AG04450 (cell line): ENCODE measurements at regions of chr14 and their contacts with region 1.

Region 1: DNA sequence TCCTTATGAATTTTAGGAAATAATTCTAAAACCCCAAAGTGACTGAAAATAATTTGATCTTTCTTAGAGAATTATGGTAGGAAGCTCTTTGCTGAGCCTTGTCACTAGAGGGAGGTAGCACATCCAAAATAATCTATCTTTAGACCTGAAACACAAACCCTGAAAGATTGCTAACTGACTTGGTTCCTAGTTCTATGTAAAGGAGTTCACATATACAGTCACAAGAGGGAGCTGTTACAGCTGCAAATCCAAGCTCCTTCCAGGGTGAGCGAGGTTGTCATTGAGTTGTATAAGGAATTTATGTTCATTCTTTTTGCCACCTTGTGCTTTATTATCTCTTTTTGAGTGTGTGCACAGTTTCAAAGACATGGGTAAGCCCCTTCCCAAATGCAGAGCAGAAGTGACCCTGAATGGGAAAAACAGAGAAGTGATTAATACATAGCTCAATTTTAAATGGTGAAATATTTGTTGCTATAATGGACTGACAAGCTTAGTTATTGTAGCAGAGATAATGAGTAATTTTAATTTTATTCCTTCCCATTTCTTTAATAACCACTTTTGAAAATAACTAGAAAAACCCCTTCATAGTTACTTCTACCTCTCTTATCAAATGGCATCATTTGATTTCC is 387.9 kb downstream of the DAD1 start:
- DNase-seq: no peak
- H3K4me3 ChIP-seq: no peak overlapping the region
- H3K27ac ChIP-seq: no peak overlapping the region
- H3K27me3 ChIP-seq: no peaks in the 10 kb centered on the region
- CTCF ChIP-seq: peak; percentile 85

Region 2: GRCh38 chr14:22163051-22163450 is 38.0 kb before region 1 on chr14:
- CTCF ChIA-PET with region 1: interaction called, 68 read pairs
- POLR2A ChIA-PET with region 1: no interaction called
- DNase-seq: no peak
- H3K4me3 ChIP-seq: no peak overlapping the region
- H3K27ac ChIP-seq: no peak overlapping the region
- H3K27me3 ChIP-seq: peaks cover 2% of the 10 kb centered on the region
- CTCF ChIP-seq: peak; percentile 60

Region 3: DNA sequence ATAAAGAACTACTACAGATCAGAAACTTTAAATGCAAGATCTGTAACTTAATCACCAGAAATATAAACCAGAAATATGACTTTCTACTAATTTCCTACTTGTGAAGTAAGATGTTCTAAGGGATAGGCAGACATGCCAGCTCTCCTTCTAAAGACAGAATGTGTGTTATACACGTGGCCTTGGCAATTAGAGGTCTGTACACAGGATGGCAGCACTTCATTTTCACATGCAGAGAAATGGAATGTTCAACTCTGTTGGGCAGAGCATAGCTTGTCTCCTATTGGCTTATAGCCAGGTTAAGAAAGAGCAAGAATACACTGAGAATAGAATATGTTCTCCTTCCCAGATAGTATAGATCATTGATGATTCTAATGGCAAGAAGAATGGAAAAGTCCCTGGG is 15.9 kb before region 1 on chr14:
- CTCF ChIA-PET with region 1: interaction called, 37 read pairs
- POLR2A ChIA-PET with region 1: interaction called, 3 read pairs
- DNase-seq: no peak
- H3K4me3 ChIP-seq: no peak overlapping the region
- H3K27ac ChIP-seq: no peak overlapping the region
- H3K27me3 ChIP-seq: no peaks in the 10 kb centered on the region
- CTCF ChIP-seq: peak; percentile 24; the same call in 1 of the 2 replicates

Region 4: GRCh38 chr14:22231018-22231417 is 29.9 kb after region 1 on chr14:
- CTCF ChIA-PET with region 1: interaction called, 96 read pairs
- POLR2A ChIA-PET with region 1: no interaction called
- DNase-seq: no peak
- H3K4me3 ChIP-seq: no peak overlapping the region
- H3K27ac ChIP-seq: no peak overlapping the region
- H3K27me3 ChIP-seq: no peaks in the 10 kb centered on the region
- CTCF ChIP-seq: no peak

Region 5: GRCh38 chr14:22282417-22282816 is 81.3 kb after region 1 on chr14:
- CTCF ChIA-PET with region 1: interaction called, 15 read pairs
- POLR2A ChIA-PET with region 1: no interaction called
- DNase-seq: no peak
- H3K4me3 ChIP-seq: no peak overlapping the region
- H3K27ac ChIP-seq: no peak overlapping the region
- H3K27me3 ChIP-seq: no peaks in the 10 kb centered on the region
- CTCF ChIP-seq: no peak

Region 6: DNA sequence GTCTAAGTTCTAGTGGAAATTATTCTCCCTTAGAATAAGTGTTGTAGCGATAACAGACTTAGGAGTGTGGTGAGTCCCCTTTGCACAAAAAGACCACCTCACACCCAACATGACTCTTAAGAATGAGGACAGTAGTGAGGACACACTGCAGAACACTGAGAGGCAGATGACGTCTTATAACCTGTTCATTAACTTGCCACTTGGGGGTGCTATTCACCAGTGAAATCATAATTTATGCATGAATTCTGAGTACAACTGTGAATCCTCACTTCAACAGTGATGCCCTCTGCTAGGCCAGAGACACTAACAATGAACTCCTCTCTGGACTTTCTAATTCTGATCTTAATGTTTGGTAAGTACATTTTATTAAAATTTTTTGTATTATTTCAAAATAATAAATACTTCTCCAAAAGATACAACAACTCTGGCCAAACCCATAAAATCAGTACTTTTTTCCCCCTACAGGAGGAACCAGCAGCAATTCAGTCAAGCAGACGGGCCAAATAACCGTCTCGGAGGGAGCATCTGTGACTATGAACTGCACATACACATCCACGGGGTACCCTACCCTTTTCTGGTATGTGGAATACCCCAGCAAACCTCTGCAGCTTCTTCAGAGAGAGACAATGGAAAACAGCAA is 113.2 kb after region 1 on chr14:
- CTCF ChIA-PET with region 1: interaction called, 23 read pairs
- POLR2A ChIA-PET with region 1: no interaction called
- DNase-seq: no peak
- H3K4me3 ChIP-seq: no peak overlapping the region
- H3K27ac ChIP-seq: no peak overlapping the region
- H3K27me3 ChIP-seq: no peaks in the 10 kb centered on the region
- CTCF ChIP-seq: peak; percentile 72

Region 7: DNA sequence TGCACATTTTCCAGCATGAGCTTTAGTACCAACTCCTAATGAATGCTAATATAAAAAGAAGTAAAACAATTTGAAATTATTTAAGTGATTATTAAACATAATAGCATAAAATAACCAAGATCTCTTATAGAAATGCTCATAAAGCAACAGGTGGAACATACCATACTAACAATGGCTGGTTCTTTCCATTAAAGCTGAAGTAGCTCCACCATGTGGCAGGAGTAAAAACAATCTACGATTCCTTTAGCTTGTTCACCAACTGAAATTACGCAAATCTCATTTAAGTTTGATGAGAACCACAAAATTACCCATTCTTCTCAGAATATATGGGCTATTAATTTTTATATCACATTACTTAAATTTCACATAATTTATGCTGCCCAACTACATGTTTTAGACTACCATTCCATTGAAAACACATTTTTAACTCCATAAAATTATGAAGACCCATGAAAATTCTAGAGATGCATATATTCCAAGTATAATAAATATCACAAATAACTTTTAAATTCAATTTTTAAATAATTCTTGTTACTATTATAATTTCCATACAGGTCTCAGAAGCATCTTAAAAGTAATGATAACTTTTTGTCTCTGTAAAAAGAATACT is 174.3 kb after region 1 on chr14:
- CTCF ChIA-PET with region 1: interaction called, 42 read pairs
- POLR2A ChIA-PET with region 1: no interaction called
- DNase-seq: peak; percentile 39
- H3K4me3 ChIP-seq: no peak overlapping the region
- H3K27ac ChIP-seq: no peak overlapping the region
- H3K27me3 ChIP-seq: peaks cover 15% of the 10 kb centered on the region
- CTCF ChIP-seq: peak; percentile 74